ENCODE measurements at regions of chr14 and their contacts with region 1.

Region 1: GRCh38 chr14:102316743-102317563 is 2.6 kb upstream of the ZNF839 start:
- DNase-seq: peak; percentile 93
- H3K4me3 ChIP-seq: peak overlapping the region; percentile 9 to 54 (median 31)
- H3K27ac ChIP-seq: no peak overlapping the region
- H3K4me1 ChIP-seq: peaks cover 25% of the 10 kb centered on the region
- H3K27me3 ChIP-seq: no peaks in the 10 kb centered on the region
- CTCF ChIP-seq: peak; percentile 76 to 85
- POLR2A ChIP-seq: peak; percentile 39

Region 2: DNA sequence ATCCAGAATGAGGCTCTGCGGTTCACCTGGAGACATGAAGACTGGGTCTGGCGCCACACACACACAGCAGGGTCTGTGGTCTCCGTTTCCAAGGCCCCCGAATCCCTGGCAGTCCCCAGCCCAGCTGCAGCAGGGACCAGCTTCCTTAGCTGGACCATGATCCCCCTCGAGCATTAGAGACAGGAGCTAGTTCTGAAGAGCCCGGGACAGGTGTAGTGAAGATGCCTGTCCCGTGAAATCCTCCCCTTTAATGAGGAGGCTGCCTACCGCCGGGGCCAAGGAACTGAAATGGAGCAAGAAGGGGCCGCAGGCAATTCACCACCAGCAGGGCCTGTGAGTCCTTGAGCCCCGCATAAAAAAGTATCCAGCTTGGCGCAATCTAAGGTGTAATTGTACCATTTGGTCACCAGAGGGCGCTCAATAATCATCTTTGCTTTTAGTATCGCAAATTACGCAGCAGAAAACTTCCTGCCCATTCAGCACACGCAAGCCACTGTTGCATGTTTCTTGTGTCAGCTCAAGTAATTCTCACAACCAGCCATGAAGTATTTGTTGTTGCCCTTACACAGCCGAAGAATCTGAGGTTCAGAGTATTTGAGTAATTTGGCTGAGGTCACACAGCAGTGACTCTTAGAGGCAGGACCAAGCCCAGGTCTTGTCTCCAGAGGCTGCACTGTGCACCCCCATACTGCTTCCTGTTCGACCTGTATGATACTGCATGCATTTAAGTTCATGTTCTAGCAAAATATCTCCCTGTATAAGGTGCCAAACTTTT is 609.7 kb before region 1 on chr14:
- CTCF ChIA-PET with region 1: interaction called, 6 read pairs
- POLR2A ChIA-PET with region 1: no interaction called
- dilution Hi-C with region 1: no loop called
- intact Hi-C with region 1: loop called (anchors 1 kb)
- DNase-seq: peak; percentile 82
- H3K4me3 ChIP-seq: no peak overlapping the region
- H3K27ac ChIP-seq: no peak overlapping the region
- H3K4me1 ChIP-seq: no peaks in the 10 kb centered on the region
- H3K27me3 ChIP-seq: peaks cover 20 to 41% of the 10 kb centered on the region in 2 experiments
- CTCF ChIP-seq: peak; percentile 67 to 75
- POLR2A ChIP-seq: no peak

Region 3: DNA sequence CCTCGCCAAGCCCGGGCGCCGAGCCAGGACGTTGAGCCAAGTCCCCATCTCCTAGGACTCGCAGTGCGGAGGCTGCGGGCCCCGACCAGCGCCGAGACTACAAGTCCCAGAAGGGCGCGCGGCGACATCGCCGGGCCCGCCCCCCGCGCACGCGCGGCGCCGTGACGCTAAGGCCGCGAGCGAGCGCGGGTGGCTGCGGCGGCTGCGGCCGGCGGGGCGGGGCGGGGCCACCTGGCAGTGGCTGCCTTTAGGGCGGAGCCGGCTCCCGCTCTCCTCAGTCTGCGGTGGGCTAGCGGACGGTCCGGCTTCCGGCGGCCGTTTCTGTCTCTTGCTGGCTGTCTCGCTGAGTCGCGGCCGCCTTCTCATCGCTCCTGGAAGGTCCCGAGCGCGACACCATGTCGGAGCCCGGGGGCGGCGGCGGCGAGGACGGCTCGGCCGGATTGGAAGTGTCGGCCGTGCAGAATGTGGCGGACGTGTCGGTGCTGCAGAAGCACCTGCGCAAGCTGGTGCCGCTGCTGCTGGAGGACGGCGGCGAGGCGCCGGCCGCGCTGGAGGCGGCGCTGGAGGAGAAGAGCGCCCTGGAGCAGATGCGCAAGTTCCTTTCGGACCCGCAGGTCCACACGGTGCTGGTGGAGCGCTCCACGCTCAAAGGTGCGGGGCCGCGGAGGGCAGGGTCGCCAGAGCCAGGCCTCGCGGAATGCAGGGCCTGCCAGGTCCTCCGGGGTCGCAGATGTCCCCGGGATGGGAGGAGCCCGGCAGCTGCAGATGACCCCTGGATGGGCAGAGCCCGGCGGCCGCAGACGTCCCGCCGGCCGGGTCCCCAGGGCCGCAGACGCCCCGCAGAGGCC is 352.4 kb before region 1 on chr14 and contains the start of gene DYNC1H1:
- CTCF ChIA-PET with region 1: no interaction called
- POLR2A ChIA-PET with region 1: no interaction called
- dilution Hi-C with region 1: no loop called
- intact Hi-C with region 1: loop called (anchors 2 kb)
- DNase-seq: peak; percentile 96
- H3K4me3 ChIP-seq: peak within 1 kb of the TSS; percentile 75 to 95 (median 90)
- H3K27ac ChIP-seq: peak within 1 kb of the TSS; percentile 64
- H3K4me1 ChIP-seq: peaks cover 14% of the 10 kb centered on the region
- H3K27me3 ChIP-seq: no peaks in the 10 kb centered on the region
- CTCF ChIP-seq: no peak
- POLR2A ChIP-seq: peak; percentile 93
- total RNA-seq, gene DYNC1H1: 596 and 648 TPM in 2 replicates

Region 4: DNA sequence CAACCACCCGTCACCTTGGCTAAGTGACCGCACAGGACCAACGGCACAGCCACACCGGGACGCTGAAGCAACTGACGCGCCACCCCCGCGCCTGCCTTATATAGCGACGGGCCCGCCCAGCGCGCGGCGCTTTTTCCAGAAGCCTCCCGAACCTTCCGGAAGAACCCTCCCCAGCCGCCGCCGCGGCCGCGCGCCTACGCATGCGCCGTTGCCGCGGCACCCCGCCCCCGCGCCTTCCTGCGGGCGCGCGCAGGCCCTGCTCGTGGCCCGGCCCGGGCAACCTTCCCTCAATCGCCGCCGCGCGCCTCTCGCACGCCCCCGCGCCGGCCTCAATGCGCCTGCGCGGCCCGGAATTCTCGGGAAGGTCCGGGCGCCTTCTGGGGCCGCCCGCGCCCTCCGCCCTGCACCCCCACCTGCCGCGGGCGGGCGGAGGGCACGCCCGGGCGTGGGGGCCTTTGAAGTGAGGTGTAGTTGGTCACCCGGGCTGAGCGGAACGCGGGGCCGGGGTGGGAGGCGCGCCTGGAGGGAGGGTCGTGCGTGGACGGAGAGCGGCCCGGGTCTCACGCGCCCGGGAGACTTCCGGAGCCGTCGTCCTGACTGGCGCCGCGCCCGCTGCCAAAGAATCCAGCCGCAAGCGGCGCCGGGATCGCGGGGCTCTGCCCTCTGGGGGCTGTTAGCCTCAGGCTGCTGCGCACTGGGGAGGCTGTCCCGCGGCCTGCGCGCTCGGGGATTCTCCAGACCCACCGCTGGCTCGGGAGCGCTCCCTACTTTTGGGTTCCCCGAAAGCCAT is 229.8 kb before region 1 on chr14 and contains the start of gene HSP90AA1:
- CTCF ChIA-PET with region 1: interaction called, 5 read pairs
- POLR2A ChIA-PET with region 1: no interaction called
- dilution Hi-C with region 1: no loop called
- intact Hi-C with region 1: loop called (anchors 2 kb)
- DNase-seq: peak; percentile 96
- H3K4me3 ChIP-seq: peak within 1 kb of the TSS; percentile 88 to 96 (median 96)
- H3K27ac ChIP-seq: peak within 1 kb of the TSS; percentile 86
- H3K4me1 ChIP-seq: peaks cover 40% of the 10 kb centered on the region
- H3K27me3 ChIP-seq: no peaks in the 10 kb centered on the region
- CTCF ChIP-seq: peak in 1 of 2 donors; percentile 11
- POLR2A ChIP-seq: peak; percentile 99
- total RNA-seq, gene HSP90AA1: 504 and 540 TPM in 2 replicates

Region 5: DNA sequence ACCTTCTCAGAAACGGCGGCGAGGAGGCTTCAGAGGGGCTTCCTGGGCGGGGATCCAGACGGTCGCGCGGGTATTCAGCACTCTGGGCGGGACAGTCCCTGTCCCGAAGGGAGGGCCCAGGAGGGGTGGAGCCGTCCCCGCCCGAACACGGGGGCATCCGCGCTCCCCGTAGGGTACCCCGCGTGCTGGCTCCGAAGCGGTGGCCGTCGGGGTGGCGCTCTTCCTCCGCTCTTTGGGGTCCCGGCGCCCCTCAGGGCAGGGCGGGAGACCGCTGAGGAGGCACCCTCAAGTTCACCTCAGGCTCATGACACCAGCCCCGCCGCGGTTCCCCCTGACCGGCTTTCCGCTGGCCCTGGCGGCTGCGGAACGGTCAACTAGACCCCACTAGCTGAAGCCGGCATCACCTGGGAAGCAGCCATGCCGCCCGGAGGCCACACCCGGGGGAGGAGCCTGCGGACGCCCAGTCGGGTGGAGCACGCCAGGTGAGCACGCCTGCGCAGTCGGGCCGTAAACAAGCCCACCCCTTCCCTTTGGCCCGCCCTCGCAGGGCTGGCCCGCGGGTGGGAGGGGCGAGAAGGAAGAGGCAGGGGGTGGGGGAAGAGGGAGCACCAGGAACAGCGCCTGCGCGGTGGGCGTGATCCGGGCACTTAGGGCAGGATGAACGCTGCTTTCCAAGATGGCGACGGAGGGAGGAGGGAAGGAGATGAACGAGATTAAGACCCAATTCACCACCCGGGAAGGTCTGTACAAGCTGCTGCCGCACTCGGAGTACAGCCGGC is 177.5 kb before region 1 on chr14 and contains the start of gene WDR20:
- CTCF ChIA-PET with region 1: interaction called, 6 read pairs
- POLR2A ChIA-PET with region 1: no interaction called
- dilution Hi-C with region 1: no loop called
- intact Hi-C with region 1: loop called (anchors 2 kb)
- DNase-seq: peak; percentile 97
- H3K4me3 ChIP-seq: peak within 1 kb of the TSS; percentile 57 to 79 (median 72)
- H3K27ac ChIP-seq: peak within 1 kb of the TSS; percentile 19
- H3K4me1 ChIP-seq: peaks cover 17% of the 10 kb centered on the region
- H3K27me3 ChIP-seq: no peaks in the 10 kb centered on the region
- CTCF ChIP-seq: no peak
- POLR2A ChIP-seq: peak; percentile 77
- total RNA-seq, gene WDR20: 22.4 and 23.6 TPM in 2 replicates

Region 6: GRCh38 chr14:102304611-102305509 is 12.1 kb before region 1 on chr14 and contains the start of gene MOK:
- CTCF ChIA-PET with region 1: interaction called, 28 read pairs
- POLR2A ChIA-PET with region 1: no interaction called
- dilution Hi-C with region 1: no loop called
- intact Hi-C with region 1: loop called (anchors 1 kb)
- DNase-seq: peak; percentile 99
- H3K4me3 ChIP-seq: peak within 1 kb of the TSS; percentile 40 to 86 (median 55)
- H3K27ac ChIP-seq: peak within 1 kb of the TSS; percentile 52
- H3K4me1 ChIP-seq: peaks cover 4% of the 10 kb centered on the region
- H3K27me3 ChIP-seq: no peaks in the 10 kb centered on the region
- CTCF ChIP-seq: no peak
- POLR2A ChIP-seq: no peak
- total RNA-seq, gene MOK: 6.1 and 6.4 TPM in 2 replicates